Naive thymus-derived CD4-positive, alpha-beta T cell (primary cell): ENCODE measurements at regions of chr1 and their contacts with region 1.

Region 1: DNA sequence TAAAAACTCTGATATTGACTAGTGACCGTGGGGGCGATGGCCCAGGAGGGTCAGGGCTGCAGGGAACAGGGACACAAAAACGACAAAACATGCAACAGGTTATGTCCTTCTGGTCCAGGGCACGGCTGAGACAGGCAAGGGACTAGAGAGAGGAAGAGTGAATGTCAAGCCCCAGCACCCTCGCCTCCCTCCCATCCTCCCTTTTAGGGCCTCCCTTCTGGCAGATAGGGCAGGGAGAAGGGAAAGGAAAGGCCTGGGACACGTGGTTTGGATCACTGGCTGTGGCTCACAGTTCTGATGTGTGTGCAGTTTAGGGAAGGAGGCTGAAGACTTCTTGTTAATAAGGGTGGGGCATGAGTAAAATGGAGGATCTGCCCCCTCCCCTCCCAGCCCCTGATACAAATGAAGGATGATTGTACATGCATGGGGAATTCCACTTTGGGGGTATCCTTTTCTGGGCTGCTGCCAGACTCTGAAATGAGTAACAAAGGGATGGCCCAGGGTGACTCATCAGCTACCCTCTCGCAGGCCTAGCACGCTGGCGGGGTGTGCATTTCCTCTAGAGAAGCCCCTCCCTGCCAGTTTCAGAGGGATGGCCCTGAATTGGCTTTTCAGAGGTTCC is 14.2 kb downstream of the CAPN2 start:
- DNase-seq: peak in 7 of 9 donors; percentile 20 to 87 (median 31)
- ATAC-seq: peak; percentile 95
- H3K4me3 ChIP-seq: no peak overlapping the region
- H3K4me3 Mint-ChIP-seq: peak overlapping the region in 9 of 10 donors; percentile 26 to 85 (median 54)
- H3K27ac ChIP-seq: peak overlapping the region; percentile 28
- H3K27ac Mint-ChIP-seq: peak overlapping the region; percentile 11 to 91 (median 75)
- H3K4me1 ChIP-seq: peaks cover 18 to 50% of the 10 kb centered on the region in 2 donors
- H3K4me1 Mint-ChIP-seq: peaks cover 43 to 80% (median 63%) of the 10 kb centered on the region in 7 donors
- H3K27me3 ChIP-seq: no peaks in the 10 kb centered on the region
- H3K27me3 Mint-ChIP-seq: no peaks in the 10 kb centered on the region

Region 2: DNA sequence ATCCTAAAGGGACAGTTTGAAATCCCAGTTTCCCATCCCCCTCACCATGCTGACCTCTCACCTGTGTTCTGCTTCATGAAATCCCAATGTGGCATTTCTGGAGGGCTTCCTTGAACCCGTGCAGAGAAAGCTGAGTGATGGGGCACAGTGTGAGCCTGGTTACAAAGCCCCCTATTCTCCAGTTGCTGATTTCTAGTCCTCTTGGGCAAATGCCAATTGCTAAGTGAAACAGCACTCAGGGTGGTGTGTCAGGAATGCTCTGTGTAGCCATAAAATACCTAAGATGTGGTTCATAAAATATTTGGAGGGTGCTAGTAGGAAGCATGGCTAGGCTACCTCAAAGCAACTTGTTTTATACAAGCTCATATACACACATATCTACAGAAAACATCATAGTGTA is 394.6 kb before region 1 on chr1:
- CTCF ChIA-PET with region 1: no interaction called
- POLR2A ChIA-PET with region 1: no interaction called
- intact Hi-C with region 1: no loop called
- DNase-seq: no peak
- ATAC-seq: no peak
- H3K4me3 ChIP-seq: no peak overlapping the region
- H3K4me3 Mint-ChIP-seq: peak overlapping the region in 1 of 10 donors; percentile 60
- H3K27ac ChIP-seq: no peak overlapping the region
- H3K27ac Mint-ChIP-seq: peak overlapping the region in 3 of 9 donors; percentile 77 to 88 (median 80)
- H3K4me1 ChIP-seq: peaks cover 0 to 15% of the 10 kb centered on the region in 2 donors
- H3K4me1 Mint-ChIP-seq: peaks cover 0 to 36% (median 21%) of the 10 kb centered on the region in 7 donors
- H3K27me3 ChIP-seq: no peaks in the 10 kb centered on the region
- H3K27me3 Mint-ChIP-seq: no peaks in the 10 kb centered on the region

Region 3: DNA sequence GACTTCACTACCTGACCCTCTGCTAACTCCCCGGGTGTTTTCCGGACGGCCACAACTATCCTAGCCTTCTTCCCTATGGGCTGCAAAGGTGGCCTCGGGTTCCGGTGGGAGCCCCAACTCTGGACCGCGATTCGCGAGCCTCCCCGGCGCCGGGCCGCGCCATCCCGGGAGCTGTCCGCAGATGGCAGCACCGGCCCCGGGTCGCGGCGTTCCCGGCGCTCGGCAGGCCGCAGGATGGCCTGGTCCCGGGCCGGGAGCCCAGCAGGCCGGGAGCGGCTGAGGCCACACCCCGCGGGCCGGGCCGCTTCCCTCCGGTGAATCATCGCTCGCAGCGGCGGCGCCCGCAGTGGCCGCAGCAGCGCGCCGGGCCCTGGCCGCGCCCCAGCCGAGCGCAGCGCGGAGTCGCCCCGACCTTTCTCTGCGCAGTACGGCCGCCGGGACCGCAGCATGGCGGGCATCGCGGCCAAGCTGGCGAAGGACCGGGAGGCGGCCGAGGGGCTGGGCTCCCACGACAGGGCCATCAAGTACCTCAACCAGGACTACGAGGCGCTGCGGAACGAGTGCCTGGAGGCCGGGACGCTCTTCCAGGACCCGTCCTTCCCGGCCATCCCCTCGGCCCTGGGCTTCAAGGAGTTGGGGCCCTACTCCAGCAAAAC is 14.2 kb before region 1 on chr1 and contains the start of gene CAPN2:
- CTCF ChIA-PET with region 1: interaction called, 3 read pairs
- POLR2A ChIA-PET with region 1: interaction called, 38 read pairs
- intact Hi-C with region 1: loop called (anchors 1 kb)
- DNase-seq: peak; percentile 29 to 78 (median 51)
- ATAC-seq: peak; percentile 78
- H3K4me3 ChIP-seq: peak within 1 kb of the TSS; percentile 61
- H3K4me3 Mint-ChIP-seq: peak within 1 kb of the TSS; percentile 70 to 93 (median 84)
- H3K27ac ChIP-seq: peak within 1 kb of the TSS; percentile 83
- H3K27ac Mint-ChIP-seq: peak within 1 kb of the TSS; percentile 82 to 93 (median 88)
- H3K4me1 ChIP-seq: peaks cover 48 to 53% of the 10 kb centered on the region in 2 donors
- H3K4me1 Mint-ChIP-seq: peaks cover 52 to 69% (median 63%) of the 10 kb centered on the region in 7 donors
- H3K27me3 ChIP-seq: no peaks in the 10 kb centered on the region
- H3K27me3 Mint-ChIP-seq: peaks cover 0 to 8% (median 0%) of the 10 kb centered on the region in 5 donors
- total RNA-seq, gene CAPN2: 86.1 to 195 (median 117) TPM

Region 4: GRCh38 chr1:223811634-223812415 is 85.3 kb after region 1 on chr1:
- CTCF ChIA-PET with region 1: no interaction called
- POLR2A ChIA-PET with region 1: no interaction called
- intact Hi-C with region 1: no loop called
- DNase-seq: peak in 6 of 9 donors; percentile 24 to 58 (median 44)
- ATAC-seq: peak; percentile 72
- H3K4me3 ChIP-seq: no peak overlapping the region
- H3K4me3 Mint-ChIP-seq: peak overlapping the region in 2 of 10 donors; percentile 44 to 49
- H3K27ac ChIP-seq: no peak overlapping the region
- H3K27ac Mint-ChIP-seq: peak overlapping the region in 6 of 9 donors; percentile 19 to 63 (median 57)
- H3K4me1 ChIP-seq: peaks cover 0 to 22% of the 10 kb centered on the region in 2 donors
- H3K4me1 Mint-ChIP-seq: peaks cover 16 to 44% (median 39%) of the 10 kb centered on the region in 7 donors
- H3K27me3 ChIP-seq: no peaks in the 10 kb centered on the region
- H3K27me3 Mint-ChIP-seq: no peaks in the 10 kb centered on the region